Spleen (tissue), 13 donors: ENCODE measurements at regions of chr7 and their contacts with region 1.

Region 1: DNA sequence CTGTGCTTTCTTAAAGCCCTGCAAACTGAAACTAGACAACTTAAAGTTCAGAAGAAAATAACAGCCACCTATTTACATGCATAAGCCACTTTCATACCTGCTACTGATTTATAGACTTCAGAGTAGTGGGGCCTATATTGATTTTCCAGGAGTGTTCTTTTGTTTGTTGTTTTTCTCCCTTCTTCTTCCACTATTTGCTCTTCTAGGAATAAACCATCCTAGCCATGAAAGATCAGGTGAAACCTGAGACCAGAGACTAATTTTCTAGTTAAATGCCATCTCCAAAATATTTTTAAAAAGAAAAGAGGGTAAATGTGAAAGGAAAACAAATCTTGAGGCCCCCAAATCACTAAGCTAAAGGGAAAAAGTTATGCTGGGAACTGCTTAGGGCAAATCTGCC is 72.4 kb upstream of the C1GALT1 start:
- DNase-seq: no peak
- H3K4me3 ChIP-seq: no peak overlapping the region
- H3K27ac ChIP-seq: no peak overlapping the region
- H3K4me1 ChIP-seq: no peaks in the 10 kb centered on the region
- H3K27me3 ChIP-seq: no peaks in the 10 kb centered on the region
- CTCF ChIP-seq: no peak
- POLR2A ChIP-seq: no peak

Region 2: GRCh38 chr7:7014827-7015610 is 94.9 kb before region 1 on chr7:
- intact Hi-C with region 1: no loop called
- DNase-seq: no peak
- H3K4me3 ChIP-seq: no peak overlapping the region
- H3K27ac ChIP-seq: no peak overlapping the region
- H3K4me1 ChIP-seq: no peaks in the 10 kb centered on the region
- H3K27me3 ChIP-seq: peaks cover 0 to 37% (median 0%) of the 10 kb centered on the region in 7 donors
- CTCF ChIP-seq: no peak
- POLR2A ChIP-seq: no peak

Region 3: DNA sequence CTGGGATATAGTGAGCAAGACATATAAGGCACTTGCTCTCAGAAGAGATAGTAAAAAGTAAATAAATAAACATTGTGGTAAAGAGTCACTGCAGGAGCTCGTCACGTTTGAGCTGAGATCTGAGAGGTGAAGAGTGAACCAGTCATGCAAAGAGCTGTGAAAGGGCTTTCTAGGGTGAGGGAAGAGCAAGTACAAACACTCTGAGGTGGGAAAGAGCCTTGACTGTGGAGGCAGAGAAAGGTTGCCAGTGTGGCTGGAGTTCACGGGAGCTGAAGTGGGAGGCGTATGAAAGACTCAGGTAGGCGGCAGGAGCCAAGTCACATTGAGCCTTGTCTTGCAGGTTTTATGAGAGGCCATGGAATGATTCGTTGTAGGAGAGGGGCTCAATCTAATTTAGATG is 213.4 kb after region 1 on chr7:
- intact Hi-C with region 1: no loop called
- DNase-seq: no peak
- H3K4me3 ChIP-seq: no peak overlapping the region
- H3K27ac ChIP-seq: no peak overlapping the region
- H3K4me1 ChIP-seq: peaks cover 0 to 28% (median 15%) of the 10 kb centered on the region in 6 donors
- H3K27me3 ChIP-seq: no peaks in the 10 kb centered on the region
- CTCF ChIP-seq: no peak
- POLR2A ChIP-seq: no peak

Region 4: GRCh38 chr7:7535691-7536090 is 425.8 kb after region 1 on chr7 and contains the start of gene COL28A1:
- intact Hi-C with region 1: loop called (anchors 5 kb)
- DNase-seq: no peak
- H3K4me3 ChIP-seq: no peak within 1 kb of the TSS
- H3K27ac ChIP-seq: no peak within 1 kb of the TSS
- H3K4me1 ChIP-seq: peaks cover 0 to 4% (median 0%) of the 10 kb centered on the region in 6 donors
- H3K27me3 ChIP-seq: peaks cover 0 to 43% (median 7%) of the 10 kb centered on the region in 7 donors
- CTCF ChIP-seq: no peak
- POLR2A ChIP-seq: no peak
- total RNA-seq, gene COL28A1: 0.20 to 0.94 (median 0.66) TPM

Region 5: DNA sequence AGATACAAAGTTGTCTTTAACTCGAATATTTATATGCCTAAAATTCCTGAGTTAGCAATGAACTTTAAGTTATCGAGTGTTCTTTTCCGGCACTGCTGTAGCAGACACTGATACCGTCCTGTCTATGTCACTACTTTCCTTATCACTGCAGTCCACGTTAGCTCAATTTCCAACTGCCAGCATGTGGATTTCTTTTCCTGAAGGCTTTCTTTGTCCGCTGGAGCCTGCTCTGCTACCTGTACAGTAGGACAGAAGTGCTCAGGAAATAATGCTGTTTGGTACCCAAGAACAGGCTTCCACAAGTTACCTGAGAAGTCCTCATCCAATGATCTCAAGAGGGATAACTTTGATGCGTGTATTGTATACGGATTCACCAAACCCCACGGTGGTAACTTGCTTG is 1652.9 kb after region 1 on chr7:
- intact Hi-C with region 1: no loop called
- DNase-seq: no peak
- H3K4me3 ChIP-seq: no peak overlapping the region
- H3K27ac ChIP-seq: no peak overlapping the region
- H3K4me1 ChIP-seq: no peaks in the 10 kb centered on the region
- H3K27me3 ChIP-seq: no peaks in the 10 kb centered on the region
- CTCF ChIP-seq: no peak
- POLR2A ChIP-seq: no peak